ENCODE measurements at regions of chr4 and their contacts with region 1.

Region 1: GRCh38 chr4:125334926-125335325 is 20.2 kb downstream of the FAT4 start:
- DNase-seq: no peak
- H3K4me3 ChIP-seq: no peak overlapping the region
- H3K27ac ChIP-seq: peak overlapping the region in 1 of 4 donors; percentile 29
- H3K4me1 ChIP-seq: peaks cover 0 to 9% (median 2%) of the 10 kb centered on the region in 4 donors
- H3K27me3 ChIP-seq: no peaks in the 10 kb centered on the region
- CTCF ChIP-seq: no peak
- EP300 ChIP-seq: no peak
- POLR2A ChIP-seq: no peak

Region 2: DNA sequence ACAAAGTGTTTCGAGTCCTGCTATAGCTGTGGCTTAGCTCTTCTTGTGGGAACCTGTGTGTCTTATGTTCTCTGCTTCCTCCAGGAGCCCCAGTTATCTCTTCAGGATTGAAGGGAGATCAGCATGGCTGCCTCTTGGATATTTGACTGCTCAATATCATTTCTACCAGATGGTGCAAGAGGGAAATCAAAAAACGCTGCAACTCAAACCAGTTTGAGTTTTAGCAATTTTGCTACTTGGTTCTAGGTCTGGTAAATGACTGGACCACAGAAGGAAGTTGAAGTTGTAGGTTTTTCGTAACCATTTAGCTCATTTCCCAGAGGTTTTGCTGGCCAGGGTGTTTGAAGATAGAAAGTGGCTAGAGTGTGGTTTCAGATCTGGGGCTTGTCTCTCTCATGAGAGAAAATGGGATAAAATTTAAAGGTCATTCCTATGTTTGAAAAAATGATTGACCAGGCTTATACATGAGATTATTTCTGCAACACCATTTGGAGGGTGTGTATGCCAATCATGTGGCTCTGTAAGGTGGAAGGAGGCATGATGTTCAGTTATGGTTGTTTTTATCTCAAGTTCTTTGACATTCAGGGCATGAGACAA is 1727.9 kb before region 1 on chr4:
- in situ Hi-C with region 1: no loop called
- intact Hi-C with region 1: loop called (anchors 5 kb)
- DNase-seq: no peak
- H3K4me3 ChIP-seq: no peak overlapping the region
- H3K27ac ChIP-seq: no peak overlapping the region
- H3K4me1 ChIP-seq: peaks cover 0 to 18% (median 13%) of the 10 kb centered on the region in 4 donors
- H3K27me3 ChIP-seq: no peaks in the 10 kb centered on the region
- CTCF ChIP-seq: no peak
- EP300 ChIP-seq: no peak
- POLR2A ChIP-seq: no peak